Gastrocnemius medialis (tissue), 4 donors: ENCODE measurements at regions of chr18 and their contacts with region 1.

Region 1: GRCh38 chr18:4040391-4041092 is 414.6 kb downstream of the DLGAP1 start:
- DNase-seq: no peak
- ATAC-seq: no peak
- H3K4me3 ChIP-seq: no peak overlapping the region
- H3K27ac ChIP-seq: no peak overlapping the region
- H3K4me1 ChIP-seq: no peaks in the 10 kb centered on the region
- H3K27me3 ChIP-seq: no peaks in the 10 kb centered on the region
- CTCF ChIP-seq: no peak
- POLR2A ChIP-seq: no peak

Region 2: DNA sequence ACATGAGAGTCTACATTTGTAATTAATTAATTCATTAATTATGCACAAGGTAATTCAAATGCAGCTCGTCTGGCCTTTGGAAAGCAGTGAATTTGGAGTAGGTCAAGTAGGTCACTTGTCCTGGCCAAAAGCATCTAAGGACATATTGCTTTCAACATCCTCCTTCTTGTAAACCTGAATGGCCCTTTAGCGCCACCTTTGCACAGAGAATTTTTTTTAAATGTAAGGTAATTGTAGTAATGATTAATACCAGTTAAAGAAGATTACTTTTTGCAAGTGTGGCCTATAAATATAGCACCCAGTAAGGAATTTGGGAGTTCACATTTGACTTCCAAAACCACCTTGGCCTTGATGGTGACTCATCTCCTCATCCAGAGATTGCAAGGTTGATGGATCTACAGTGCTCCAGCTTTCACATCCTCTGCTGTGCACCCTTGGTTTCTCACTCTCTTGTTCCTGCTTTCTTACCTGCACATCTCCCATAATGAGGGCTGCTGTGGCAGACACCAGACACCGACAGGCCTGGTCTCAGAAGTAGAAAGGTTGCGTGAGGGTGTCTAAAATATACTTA is 108.9 kb before region 1 on chr18:
- in situ Hi-C with region 1: loop called in 1 of 4 experiments (anchors 25 kb)
- intact Hi-C with region 1: no loop called
- DNase-seq: no peak
- ATAC-seq: no peak
- H3K4me3 ChIP-seq: no peak overlapping the region
- H3K27ac ChIP-seq: no peak overlapping the region
- H3K4me1 ChIP-seq: no peaks in the 10 kb centered on the region
- H3K27me3 ChIP-seq: no peaks in the 10 kb centered on the region
- CTCF ChIP-seq: no peak
- POLR2A ChIP-seq: no peak

Region 3: DNA sequence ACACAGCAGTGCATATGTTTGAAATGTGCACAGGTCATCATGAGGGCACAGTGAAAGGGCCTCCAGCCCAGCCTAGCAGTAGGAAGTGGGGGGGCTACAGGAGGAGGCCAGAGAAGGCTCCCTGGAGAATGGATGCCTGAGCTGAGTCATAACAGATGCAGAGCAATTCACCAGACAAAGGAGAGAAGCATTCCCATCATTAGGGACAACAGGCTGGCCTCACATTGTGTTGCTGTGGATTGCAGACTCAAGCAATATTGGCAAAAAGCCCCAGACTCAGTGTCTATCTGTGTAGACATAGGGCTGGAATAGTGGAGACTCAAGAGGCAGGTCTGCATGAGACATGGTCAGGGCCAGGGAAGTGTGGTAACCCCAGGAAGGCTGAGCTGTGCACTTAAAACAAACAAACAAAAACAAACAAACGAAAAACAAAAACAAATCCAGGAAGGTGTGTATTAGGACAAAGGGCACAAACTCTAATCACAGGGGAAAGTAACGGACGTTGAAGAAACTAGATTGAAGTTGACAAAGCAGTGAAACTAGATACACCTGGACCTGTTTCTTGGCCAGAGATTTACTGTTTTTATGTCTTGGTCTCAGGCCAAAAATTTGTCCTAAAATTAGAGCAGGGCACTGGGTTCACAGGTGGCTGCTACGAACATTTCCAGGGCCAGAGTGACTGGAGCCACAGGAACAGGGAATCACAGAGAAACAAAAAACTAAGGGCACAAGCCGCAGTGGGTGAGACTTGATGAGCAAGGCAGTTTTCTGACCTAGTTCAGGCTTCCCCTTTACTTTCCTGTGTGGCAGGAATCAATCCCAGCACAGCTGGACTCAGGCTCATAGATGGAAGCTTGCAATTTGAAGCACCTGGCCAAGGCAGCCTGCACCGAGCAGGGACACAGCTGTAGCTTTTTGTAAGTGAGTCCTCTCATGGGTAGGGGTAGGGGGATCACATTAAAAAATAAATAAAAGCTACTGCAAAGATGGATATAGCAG is 85.0 kb after region 1 on chr18:
- in situ Hi-C with region 1: loop called in 1 of 4 experiments (anchors 25 kb)
- intact Hi-C with region 1: no loop called
- DNase-seq: peak in 1 of 2 donors; percentile 30
- ATAC-seq: peak; percentile 60 to 65
- H3K4me3 ChIP-seq: no peak overlapping the region
- H3K27ac ChIP-seq: peak overlapping the region in 2 of 4 donors; percentile 5 to 35
- H3K4me1 ChIP-seq: peaks cover 13 to 15% of the 10 kb centered on the region in 2 donors
- H3K27me3 ChIP-seq: no peaks in the 10 kb centered on the region
- CTCF ChIP-seq: no peak
- POLR2A ChIP-seq: no peak